Posterior vena cava (tissue), 2 donors: ENCODE measurements at regions of chr5 and their contacts with region 1.

Region 1: DNA sequence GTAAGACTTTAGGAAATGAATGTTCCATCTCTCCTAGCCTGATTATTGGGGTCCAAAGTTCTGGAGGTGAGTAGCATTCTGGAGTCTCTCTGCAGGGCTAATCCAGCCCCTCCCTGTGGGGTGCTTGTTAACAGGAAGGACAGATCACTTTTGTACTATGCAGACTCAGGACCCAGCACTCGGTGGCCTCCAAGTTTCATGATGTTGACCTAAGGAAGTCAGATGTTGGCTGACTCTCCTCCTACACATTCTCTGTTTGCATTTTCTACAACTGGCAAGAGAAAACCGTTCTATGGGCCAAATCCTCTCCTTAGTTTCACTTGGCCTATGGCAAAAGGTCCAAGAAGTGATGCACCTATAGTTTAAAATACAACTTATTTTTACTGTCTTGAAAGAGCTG is 5.5 kb upstream of the PDE8B start:
- DNase-seq: no peak

Region 2: DNA sequence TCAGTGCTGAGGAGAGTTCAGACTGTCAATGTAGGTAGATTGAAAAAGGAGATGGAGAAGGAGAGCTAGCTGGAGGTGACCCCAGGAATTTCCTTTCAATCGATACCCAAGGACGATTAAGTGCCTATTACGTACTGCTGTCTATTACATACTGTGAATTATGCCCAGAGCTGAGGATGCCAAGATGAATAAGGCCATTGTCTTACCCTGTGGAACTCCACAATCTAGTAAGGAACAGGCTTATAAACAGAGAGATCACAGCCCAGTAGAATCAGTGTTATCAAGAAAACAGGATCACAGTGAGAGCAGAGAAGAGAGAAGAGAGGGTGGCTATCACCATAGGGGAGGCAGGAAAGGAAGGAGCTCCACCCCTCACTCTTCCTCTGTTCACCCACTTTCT is 48.6 kb before region 1 on chr5:
- intact Hi-C with region 1: loop called in 1 of 2 experiments (anchors 1 kb)
- DNase-seq: no peak

Region 3: GRCh38 chr5:77168161-77168875 is 36.6 kb before region 1 on chr5:
- intact Hi-C with region 1: no loop called
- DNase-seq: peak; percentile 84